GM12878 (cell line): ENCODE measurements at regions of chr12 and their contacts with region 1.

Region 1: DNA sequence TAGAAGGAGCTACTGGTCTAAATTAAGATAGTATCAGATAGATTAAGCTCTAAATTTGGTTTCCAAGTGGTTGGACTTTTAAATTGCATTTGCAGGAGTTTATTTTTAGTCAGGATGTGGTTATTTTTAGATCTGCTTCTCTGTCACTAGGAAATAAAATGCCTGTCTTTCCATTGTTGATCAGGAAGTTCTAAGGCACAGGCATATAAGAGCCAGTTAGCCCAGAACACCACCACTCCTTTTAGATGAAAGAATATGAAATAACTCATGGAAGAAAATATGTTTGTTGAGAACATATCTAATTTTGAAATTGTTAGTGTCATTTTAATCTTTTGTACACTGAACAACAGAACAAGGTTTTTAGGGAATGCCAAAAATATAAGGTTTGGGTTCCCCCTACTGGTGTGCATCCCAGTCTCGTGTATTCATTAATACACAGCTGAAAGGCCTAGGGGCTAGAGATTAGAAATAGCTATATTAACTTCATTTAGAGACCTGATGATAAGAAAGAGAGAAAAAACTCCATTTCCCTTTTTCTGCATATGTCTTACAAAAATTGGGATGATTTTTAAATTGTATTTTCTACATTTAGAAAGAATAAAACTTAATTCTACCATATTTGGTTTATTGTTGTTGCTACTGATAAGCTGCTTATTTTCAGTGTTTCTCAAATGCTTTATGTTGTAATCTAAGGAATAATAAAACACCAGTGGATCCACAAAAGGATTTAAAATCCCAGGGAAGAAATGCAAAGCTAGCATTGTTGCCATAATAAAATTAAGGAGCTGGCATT is 67.2 kb downstream of the RIC8B start:
- DNase-seq: no peak
- ATAC-seq: peak; percentile 79
- H3K4me3 ChIP-seq: no peak overlapping the region
- H3K27ac ChIP-seq: no peak overlapping the region
- H3K4me1 ChIP-seq: no peaks in the 10 kb centered on the region
- H3K27me3 ChIP-seq: no peaks in the 10 kb centered on the region
- CTCF ChIP-seq: peak; percentile 44 to 68 (median 60); a peak in 5 of 6 replicates
- EP300 ChIP-seq: no peak
- POLR2A ChIP-seq: no peak
- RAD21 ChIP-seq: peak; percentile 83

Region 2: DNA sequence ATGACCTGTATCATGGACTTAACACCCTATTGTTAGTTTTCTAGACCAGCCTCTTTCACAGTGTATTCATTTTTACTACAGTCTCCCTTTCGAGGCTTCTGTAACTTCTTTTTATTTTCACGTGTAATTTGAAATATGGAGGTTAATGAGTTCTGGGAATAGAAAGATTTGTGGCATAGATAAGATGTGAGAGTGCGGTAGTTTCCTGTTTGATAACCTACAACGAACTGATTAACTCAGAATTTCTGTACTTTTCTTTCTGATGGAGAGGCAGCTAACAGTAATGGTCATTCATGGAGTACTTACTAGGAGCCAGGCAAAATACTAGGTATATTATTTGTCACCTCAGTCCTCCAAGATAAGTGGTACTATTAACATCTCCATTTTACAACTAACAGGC is 462.9 kb before region 1 on chr12:
- CTCF ChIA-PET with region 1: interaction called, 19 read pairs
- POLR2A ChIA-PET with region 1: no interaction called
- RAD21 ChIA-PET with region 1: interaction called, 44 read pairs
- SMC1A ChIA-PET with region 1: interaction called, 12 read pairs
- in situ Hi-C with region 1: no loop called
- intact Hi-C with region 1: no loop called
- DNase-seq: no peak
- ATAC-seq: no peak
- H3K4me3 ChIP-seq: no peak overlapping the region
- H3K27ac ChIP-seq: no peak overlapping the region
- H3K4me1 ChIP-seq: no peaks in the 10 kb centered on the region
- H3K27me3 ChIP-seq: no peaks in the 10 kb centered on the region
- CTCF ChIP-seq: no peak
- EP300 ChIP-seq: no peak
- POLR2A ChIP-seq: no peak
- RAD21 ChIP-seq: no peak

Region 3: DNA sequence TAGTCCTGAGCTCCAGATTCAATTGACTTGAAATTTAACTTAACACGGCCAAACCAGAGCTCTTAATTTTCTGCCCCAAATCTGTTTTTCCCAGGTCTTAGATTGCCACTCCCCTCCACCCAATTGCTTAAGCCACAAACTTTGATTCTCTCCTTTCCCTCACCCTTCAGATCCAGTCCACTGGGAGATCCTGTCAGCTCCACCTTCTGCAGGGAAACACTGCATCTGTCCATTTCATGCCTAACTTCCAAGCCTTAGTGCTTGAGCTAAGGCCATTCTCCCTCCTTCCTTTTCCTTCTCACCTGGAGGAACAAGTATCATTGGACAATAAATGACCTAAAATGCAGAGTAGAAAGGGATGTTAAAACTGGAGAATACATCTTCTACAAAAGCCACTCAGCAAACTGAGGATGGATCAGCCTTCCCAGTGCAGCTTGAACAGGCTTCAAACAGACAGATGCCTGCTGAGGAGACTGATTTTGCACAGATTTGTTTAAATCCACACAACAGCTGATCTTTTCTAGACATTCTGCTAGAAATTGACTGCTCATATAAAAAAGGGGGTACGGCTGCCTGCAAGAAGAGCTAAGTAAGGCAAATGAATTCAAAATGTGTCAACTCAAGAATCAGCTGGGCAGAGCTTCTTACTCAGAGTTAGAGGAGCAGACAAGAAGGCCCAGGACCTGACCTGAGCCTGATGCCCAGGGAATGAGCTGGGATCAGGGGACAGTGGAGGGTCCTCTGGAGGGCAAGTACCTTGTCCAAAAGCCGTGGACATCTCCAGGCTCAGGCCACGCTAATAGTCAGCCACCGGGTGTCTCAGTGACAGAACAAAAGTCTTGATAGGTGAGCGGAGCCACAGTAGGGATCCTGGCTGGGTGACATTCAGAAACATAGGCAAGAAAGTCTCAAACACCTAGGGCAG is 148.5 kb before region 1 on chr12:
- CTCF ChIA-PET with region 1: interaction called, 10 read pairs
- POLR2A ChIA-PET with region 1: no interaction called
- RAD21 ChIA-PET with region 1: interaction called, 3 read pairs
- SMC1A ChIA-PET with region 1: interaction called, 3 read pairs
- in situ Hi-C with region 1: no loop called
- intact Hi-C with region 1: no loop called
- DNase-seq: no peak
- ATAC-seq: no peak
- H3K4me3 ChIP-seq: no peak overlapping the region
- H3K27ac ChIP-seq: no peak overlapping the region
- H3K4me1 ChIP-seq: no peaks in the 10 kb centered on the region
- H3K27me3 ChIP-seq: no peaks in the 10 kb centered on the region
- CTCF ChIP-seq: no peak
- EP300 ChIP-seq: no peak
- POLR2A ChIP-seq: no peak
- RAD21 ChIP-seq: no peak

Region 4: GRCh38 chr12:106790020-106790419 is 51.7 kb before region 1 on chr12:
- CTCF ChIA-PET with region 1: interaction called, 16 read pairs
- POLR2A ChIA-PET with region 1: no interaction called
- RAD21 ChIA-PET with region 1: interaction called, 3 read pairs
- SMC1A ChIA-PET with region 1: interaction called, 5 read pairs
- in situ Hi-C with region 1: no loop called
- intact Hi-C with region 1: no loop called
- DNase-seq: no peak
- ATAC-seq: peak; percentile 69
- H3K4me3 ChIP-seq: no peak overlapping the region
- H3K27ac ChIP-seq: no peak overlapping the region
- H3K4me1 ChIP-seq: no peaks in the 10 kb centered on the region
- H3K27me3 ChIP-seq: no peaks in the 10 kb centered on the region
- CTCF ChIP-seq: peak in 2 of 3 experiments; percentile 13 to 27; a peak in 1 of 6 replicates
- EP300 ChIP-seq: no peak
- POLR2A ChIP-seq: no peak
- RAD21 ChIP-seq: peak; percentile 29

Region 5: DNA sequence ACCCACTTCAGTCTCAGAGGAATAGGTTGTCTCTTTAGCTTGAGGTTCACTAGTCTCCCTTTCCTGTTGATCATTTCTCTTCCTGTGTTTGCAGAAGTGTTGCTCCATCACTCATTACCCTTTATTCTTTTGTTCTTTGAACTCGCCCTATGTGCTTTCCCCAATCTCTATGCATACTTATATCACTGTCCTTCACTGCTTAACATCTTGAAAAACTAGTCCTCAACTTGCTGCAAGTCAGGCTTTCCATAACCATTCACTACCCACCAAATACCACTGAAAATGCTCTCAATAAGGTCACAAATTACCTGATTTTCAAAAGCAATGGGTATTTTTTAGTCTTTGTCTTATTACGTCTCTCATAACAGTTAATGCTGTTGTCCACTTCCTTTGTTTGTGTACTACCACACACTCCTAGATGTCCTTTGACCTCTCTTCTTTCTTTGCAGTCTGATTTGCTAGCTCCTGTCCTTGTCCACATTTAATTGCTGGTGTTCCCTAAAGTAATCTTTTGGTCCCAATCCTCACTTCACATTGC is 13.6 kb after region 1 on chr12:
- CTCF ChIA-PET with region 1: interaction called, 10 read pairs
- POLR2A ChIA-PET with region 1: no interaction called
- RAD21 ChIA-PET with region 1: interaction called, 7 read pairs
- SMC1A ChIA-PET with region 1: interaction called, 5 read pairs
- in situ Hi-C with region 1: no loop called
- intact Hi-C with region 1: no loop called
- DNase-seq: no peak
- ATAC-seq: no peak
- H3K4me3 ChIP-seq: no peak overlapping the region
- H3K27ac ChIP-seq: no peak overlapping the region
- H3K4me1 ChIP-seq: no peaks in the 10 kb centered on the region
- H3K27me3 ChIP-seq: no peaks in the 10 kb centered on the region
- CTCF ChIP-seq: no peak
- EP300 ChIP-seq: no peak
- POLR2A ChIP-seq: no peak
- RAD21 ChIP-seq: no peak